WTC11 (cell line): ENCODE measurements at regions of chr15 and their contacts with region 1.

Region 1: GRCh38 chr15:89874926-89875564 is 18.7 kb downstream of the AP3S2 start:
- DNase-seq: peak; percentile 85
- ATAC-seq: peak; percentile 96
- H3K4me3 Mint-ChIP-seq: no peak overlapping the region
- H3K27ac Mint-ChIP-seq: peak overlapping the region; percentile 17
- H3K4me1 Mint-ChIP-seq: no peaks in the 10 kb centered on the region
- H3K27me3 Mint-ChIP-seq: no peaks in the 10 kb centered on the region
- CTCF ChIP-seq: peak; percentile 82

Region 2: GRCh38 chr15:89625716-89626115 is 249.3 kb before region 1 on chr15:
- CTCF ChIA-PET with region 1: no interaction called
- POLR2A ChIA-PET with region 1: no interaction called
- DNase-seq: no peak
- ATAC-seq: no peak
- H3K4me3 Mint-ChIP-seq: no peak overlapping the region
- H3K27ac Mint-ChIP-seq: peak overlapping the region; percentile 65; the same call in 1 of the 2 replicates
- H3K4me1 Mint-ChIP-seq: no peaks in the 10 kb centered on the region
- H3K27me3 Mint-ChIP-seq: no peaks in the 10 kb centered on the region
- CTCF ChIP-seq: no peak

Region 3: GRCh38 chr15:89673165-89673512 is 201.9 kb before region 1 on chr15:
- CTCF ChIA-PET with region 1: interaction called, 19 read pairs
- POLR2A ChIA-PET with region 1: no interaction called
- DNase-seq: peak; percentile 86
- ATAC-seq: peak; percentile 96
- H3K4me3 Mint-ChIP-seq: no peak overlapping the region
- H3K27ac Mint-ChIP-seq: no peak overlapping the region
- H3K4me1 Mint-ChIP-seq: no peaks in the 10 kb centered on the region; the same call in 1 of the 2 replicates
- H3K27me3 Mint-ChIP-seq: peaks cover 2% of the 10 kb centered on the region; the same call in 1 of the 2 replicates
- CTCF ChIP-seq: peak; percentile 67

Region 4: GRCh38 chr15:89740137-89740536 is 134.9 kb before region 1 on chr15:
- CTCF ChIA-PET with region 1: interaction called, 33 read pairs
- POLR2A ChIA-PET with region 1: no interaction called
- DNase-seq: peak; percentile 69
- ATAC-seq: peak; percentile 97
- H3K4me3 Mint-ChIP-seq: no peak overlapping the region
- H3K27ac Mint-ChIP-seq: no peak overlapping the region
- H3K4me1 Mint-ChIP-seq: no peaks in the 10 kb centered on the region
- H3K27me3 Mint-ChIP-seq: peaks cover 4% of the 10 kb centered on the region
- CTCF ChIP-seq: peak; percentile 93

Region 5: DNA sequence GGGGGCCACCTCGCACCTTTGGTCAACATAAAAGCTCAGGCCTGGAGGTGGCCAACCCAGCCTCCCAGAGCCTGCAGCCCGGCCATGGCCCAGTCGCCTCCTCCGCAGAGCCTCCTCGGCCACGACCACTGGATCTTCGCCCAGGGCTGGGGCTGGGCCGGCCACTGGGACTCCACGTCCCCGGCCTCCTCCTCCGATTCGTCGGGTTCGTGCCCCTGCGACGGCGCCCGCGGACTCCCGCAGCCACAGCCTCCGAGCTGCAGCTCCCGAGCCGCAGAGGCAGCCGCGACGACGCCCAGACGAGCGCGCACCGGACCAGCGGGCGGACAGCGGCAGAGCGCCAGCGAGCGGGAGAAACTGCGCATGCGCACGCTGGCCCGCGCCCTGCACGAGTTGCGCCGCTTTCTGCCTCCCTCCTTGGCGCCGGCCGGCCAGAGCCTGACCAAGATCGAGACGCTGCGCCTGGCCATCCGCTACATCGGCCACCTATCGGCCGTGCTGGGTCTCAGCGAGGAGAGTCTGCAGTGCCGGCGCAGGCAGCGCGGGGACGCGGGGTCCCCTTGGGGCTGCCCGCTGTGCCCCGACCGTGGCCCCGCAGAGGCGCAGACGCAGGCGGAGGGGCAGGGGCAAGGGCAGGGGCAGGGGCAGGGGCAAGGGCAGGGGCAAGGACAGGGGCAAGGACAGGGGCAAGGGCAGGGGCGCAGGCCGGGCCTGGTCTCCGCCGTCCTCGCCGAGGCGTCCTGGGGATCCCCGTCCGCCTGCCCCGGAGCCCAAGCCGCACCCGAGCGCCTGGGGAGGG is 98.6 kb before region 1 on chr15 and contains the start of gene MESP2:
- CTCF ChIA-PET with region 1: interaction called, 17 read pairs
- POLR2A ChIA-PET with region 1: no interaction called
- DNase-seq: peak; percentile 91
- ATAC-seq: peak; percentile 96
- H3K4me3 Mint-ChIP-seq: peak within 1 kb of the TSS; percentile 60
- H3K27ac Mint-ChIP-seq: no peak within 1 kb of the TSS
- H3K4me1 Mint-ChIP-seq: 0 out of 2 replicates have a peak, but pooled peaks cover 2% of the 10 kb centered on the region
- H3K27me3 Mint-ChIP-seq: peaks cover 42% of the 10 kb centered on the region
- CTCF ChIP-seq: no peak
- total RNA-seq, gene MESP2: 0.66 to 1.0 TPM (median 0.68 TPM) in 3 replicates

Region 6: DNA sequence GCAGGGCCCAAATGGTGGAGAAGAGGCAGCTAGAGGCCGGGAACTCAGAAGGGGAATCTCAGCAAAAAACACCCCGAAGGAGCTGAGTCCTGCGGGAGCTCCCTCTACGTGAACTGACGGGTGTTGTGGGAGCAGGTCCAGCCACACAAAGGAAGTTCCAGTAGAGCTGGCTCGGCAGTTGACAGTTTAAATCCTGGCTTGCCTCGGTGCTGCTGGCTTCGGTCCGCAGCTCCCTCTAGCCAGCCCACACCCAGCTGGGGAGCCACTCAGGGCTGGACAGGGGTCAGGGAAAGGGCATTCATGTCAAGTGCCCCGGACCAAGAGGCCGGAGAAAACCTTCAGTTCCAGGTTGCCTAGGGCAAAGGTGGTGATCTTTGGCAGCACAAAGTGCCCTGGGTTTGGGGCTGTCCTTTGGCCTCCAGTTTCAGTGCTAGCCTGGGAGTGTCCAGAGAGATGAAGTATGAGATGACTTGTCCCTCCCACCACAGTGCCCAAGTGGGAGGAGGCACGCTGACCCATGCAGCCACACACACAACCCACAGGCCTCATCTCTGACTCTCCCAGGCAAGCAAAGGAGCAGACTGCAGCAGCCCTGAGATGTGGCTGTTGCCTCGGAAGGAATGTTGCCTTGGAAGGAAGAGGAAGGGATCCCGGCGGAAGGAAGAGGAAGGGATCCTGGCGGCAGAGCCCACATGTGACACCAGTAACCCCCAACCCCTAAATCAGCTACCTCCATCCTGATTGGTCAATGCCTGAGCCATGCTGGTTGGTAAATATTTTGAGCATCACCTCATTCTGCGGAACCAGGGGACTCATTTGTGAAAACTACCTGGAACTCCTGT is 46.6 kb before region 1 on chr15:
- CTCF ChIA-PET with region 1: interaction called, 11 read pairs
- POLR2A ChIA-PET with region 1: no interaction called
- DNase-seq: no peak
- ATAC-seq: peak; percentile 36
- H3K4me3 Mint-ChIP-seq: no peak overlapping the region
- H3K27ac Mint-ChIP-seq: no peak overlapping the region
- H3K4me1 Mint-ChIP-seq: peaks cover 14% of the 10 kb centered on the region
- H3K27me3 Mint-ChIP-seq: no peaks in the 10 kb centered on the region
- CTCF ChIP-seq: no peak

Region 7: GRCh38 chr15:89893696-89894455 is 18.8 kb after region 1 on chr15 and contains the start of gene AP3S2:
- CTCF ChIA-PET with region 1: interaction called, 14 read pairs
- POLR2A ChIA-PET with region 1: no interaction called
- DNase-seq: peak; percentile 87
- ATAC-seq: peak; percentile 77
- H3K4me3 Mint-ChIP-seq: peak within 1 kb of the TSS; percentile 99
- H3K27ac Mint-ChIP-seq: peak within 1 kb of the TSS; percentile 99
- H3K4me1 Mint-ChIP-seq: peaks cover 19% of the 10 kb centered on the region
- H3K27me3 Mint-ChIP-seq: no peaks in the 10 kb centered on the region
- CTCF ChIP-seq: no peak
- total RNA-seq, gene AP3S2: 35.7 to 40.0 TPM (median 36.7 TPM) in 3 replicates